ENCODE measurements at regions of chr1 and their contacts with region 1.

Region 1: DNA sequence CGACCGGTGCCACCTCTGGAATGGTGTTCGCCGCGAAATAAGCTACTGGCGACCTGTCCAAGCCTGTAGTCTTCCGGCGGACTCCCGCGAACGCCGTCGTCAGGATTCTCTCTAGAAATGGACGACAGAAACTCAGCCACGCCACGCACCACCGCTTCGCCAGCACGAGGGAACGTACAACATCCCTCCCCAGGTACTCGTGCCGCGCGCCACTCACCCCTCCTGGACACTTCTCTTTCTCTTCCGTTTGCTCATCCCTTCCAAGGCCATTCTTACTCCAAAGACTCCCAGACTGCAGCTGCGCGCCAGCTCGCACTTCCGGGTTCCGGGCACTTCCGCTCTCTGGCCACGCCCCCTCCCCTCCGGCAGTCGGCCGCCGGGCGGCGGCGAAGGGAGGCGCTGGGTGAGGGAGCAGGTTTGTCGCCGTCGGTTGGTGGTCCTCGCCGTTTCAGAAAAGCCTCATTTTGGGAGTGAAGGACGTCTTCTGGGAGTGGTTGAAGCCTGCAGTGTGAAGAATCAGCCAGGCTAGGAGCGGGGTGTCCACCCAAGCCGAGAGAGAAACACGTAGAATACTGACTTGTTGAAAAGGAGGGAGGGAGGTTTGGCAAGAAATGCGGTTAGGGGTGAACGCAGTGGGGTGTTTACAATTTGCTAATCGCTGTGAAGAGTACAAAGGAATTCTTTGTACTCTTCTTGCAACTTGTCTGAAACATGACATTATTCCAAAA is at the start of gene RBM34:
- DNase-seq: peak; percentile 95 to 97 (median 96)
- ATAC-seq: peak; percentile 97
- H3K4me3 ChIP-seq: peak within 1 kb of the TSS; percentile 78
- H3K27ac ChIP-seq: peak within 1 kb of the TSS; percentile 92
- H3K4me1 ChIP-seq: peaks cover 7 to 9% of the 10 kb centered on the region in 2 experiments; a peak in 3 of 5 replicates
- H3K27me3 ChIP-seq: no peaks in the 10 kb centered on the region; a peak in 1 of 5 replicates
- CTCF ChIP-seq: peak in 2 of 3 experiments; percentile 30 to 52; a peak in 5 of 6 replicates
- EP300 ChIP-seq: peak; percentile 7; the same call in 1 of the 2 replicates
- POLR2A ChIP-seq: peak; percentile 99
- RAD21 ChIP-seq: peak in 1 of 2 experiments; percentile 23; a peak in 1 of 4 replicates
- polyA plus RNA-seq, gene RBM34: 116 to 141 TPM

Region 2: GRCh38 chr1:235105051-235106043 is 55.8 kb before region 1 on chr1:
- CTCF ChIA-PET with region 1: no interaction called
- POLR2A ChIA-PET with region 1: interaction called, 5 read pairs
- in situ Hi-C with region 1: no loop called
- intact Hi-C with region 1: loop called (anchors 1 kb)
- DNase-seq: peak in 1 of 4 experiments; percentile 30
- ATAC-seq: peak; percentile 20
- H3K4me3 ChIP-seq: no peak overlapping the region
- H3K27ac ChIP-seq: peak overlapping the region; percentile 61; the same call in 2 of the 3 replicates
- H3K4me1 ChIP-seq: peaks cover 5 to 14% of the 10 kb centered on the region in 2 experiments; a peak in 4 of 5 replicates
- H3K27me3 ChIP-seq: no peaks in the 10 kb centered on the region
- CTCF ChIP-seq: no peak
- EP300 ChIP-seq: no peak
- POLR2A ChIP-seq: no peak
- RAD21 ChIP-seq: no peak; a peak in 1 of 4 replicates

Region 3: DNA sequence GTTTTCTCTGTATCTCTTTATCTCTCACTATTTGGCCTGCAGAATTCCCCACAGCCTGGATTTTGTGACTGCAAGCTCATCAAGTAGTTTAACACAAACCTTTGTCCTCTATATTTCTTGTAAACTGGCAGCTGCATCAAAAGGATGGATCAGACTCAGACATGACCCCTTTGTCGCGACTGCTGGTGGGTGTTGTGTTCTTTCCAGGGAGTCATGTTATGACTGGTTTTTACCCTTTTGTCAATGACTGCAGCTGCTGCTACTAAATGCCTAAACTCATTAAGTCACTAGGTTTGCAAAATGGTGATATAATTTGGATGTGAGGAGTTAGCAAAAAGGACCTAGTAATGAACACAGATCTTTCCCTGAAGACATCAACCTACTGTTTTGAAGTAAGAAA is 22.3 kb before region 1 on chr1:
- CTCF ChIA-PET with region 1: no interaction called
- POLR2A ChIA-PET with region 1: interaction called, 11 read pairs
- in situ Hi-C with region 1: no loop called
- intact Hi-C with region 1: no loop called
- DNase-seq: no peak
- ATAC-seq: no peak
- H3K4me3 ChIP-seq: no peak overlapping the region
- H3K27ac ChIP-seq: no peak overlapping the region
- H3K4me1 ChIP-seq: no peaks in the 10 kb centered on the region
- H3K27me3 ChIP-seq: no peaks in the 10 kb centered on the region
- CTCF ChIP-seq: no peak
- EP300 ChIP-seq: no peak
- POLR2A ChIP-seq: no peak
- RAD21 ChIP-seq: no peak

Measured in K562 (cell line).